ENCODE measurements at regions of chrX and their contacts with region 1.

Region 1: GRCh38 chrX:69222103-69223090 is 57.1 kb upstream of the PJA1 start:
- DNase-seq: peak; percentile 66 to 79
- ATAC-seq: peak; percentile 91 to 96
- H3K4me3 ChIP-seq: no peak overlapping the region
- H3K27ac ChIP-seq: no peak overlapping the region
- H3K4me1 ChIP-seq: no peaks in the 10 kb centered on the region
- CTCF ChIP-seq: peak; percentile 75
- EP300 ChIP-seq: no peak
- POLR2A ChIP-seq: no peak
- RAD21 ChIP-seq: peak; percentile 89 to 93

Region 2: DNA sequence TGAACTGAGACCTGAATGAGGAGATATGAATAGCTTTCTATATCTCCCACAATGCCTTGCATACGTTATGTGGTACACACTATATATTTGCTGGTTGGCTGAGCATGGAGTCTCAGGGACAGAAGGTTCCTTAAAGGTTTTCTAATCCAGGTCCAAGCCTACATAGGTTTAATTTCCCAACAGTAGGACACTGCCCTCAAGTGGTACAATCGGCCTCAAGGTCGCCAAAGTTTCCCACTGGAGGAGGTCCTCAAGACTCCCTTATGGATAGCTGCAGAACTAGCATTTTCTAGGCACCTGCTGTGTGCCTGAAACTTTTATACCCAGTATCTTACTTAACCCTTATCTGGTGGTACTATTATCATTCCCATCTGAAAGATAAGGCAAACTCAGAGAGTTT is 414.6 kb before region 1 on chrX:
- CTCF ChIA-PET with region 1: interaction called, 10 read pairs
- POLR2A ChIA-PET with region 1: no interaction called
- DNase-seq: peak; percentile 10 to 48
- ATAC-seq: peak; percentile 70 to 82; a peak in 4 of 6 replicates
- H3K4me3 ChIP-seq: no peak overlapping the region
- H3K27ac ChIP-seq: no peak overlapping the region
- H3K4me1 ChIP-seq: no peaks in the 10 kb centered on the region
- CTCF ChIP-seq: peak; percentile 39
- EP300 ChIP-seq: no peak
- POLR2A ChIP-seq: no peak
- RAD21 ChIP-seq: peak; percentile 38 to 49; a peak in 3 of 5 replicates

Region 3: GRCh38 chrX:69195192-69195591 is 27.2 kb before region 1 on chrX:
- CTCF ChIA-PET with region 1: interaction called, 12 read pairs
- POLR2A ChIA-PET with region 1: no interaction called
- DNase-seq: no peak
- ATAC-seq: no peak
- H3K4me3 ChIP-seq: no peak overlapping the region
- H3K27ac ChIP-seq: no peak overlapping the region
- H3K4me1 ChIP-seq: no peaks in the 10 kb centered on the region
- CTCF ChIP-seq: no peak
- EP300 ChIP-seq: no peak
- POLR2A ChIP-seq: no peak
- RAD21 ChIP-seq: no peak

Region 4: GRCh38 chrX:69210581-69210980 is 11.8 kb before region 1 on chrX:
- CTCF ChIA-PET with region 1: interaction called, 25 read pairs
- POLR2A ChIA-PET with region 1: no interaction called
- DNase-seq: no peak
- ATAC-seq: no peak
- H3K4me3 ChIP-seq: no peak overlapping the region
- H3K27ac ChIP-seq: no peak overlapping the region
- H3K4me1 ChIP-seq: no peaks in the 10 kb centered on the region
- CTCF ChIP-seq: no peak
- EP300 ChIP-seq: no peak
- POLR2A ChIP-seq: no peak
- RAD21 ChIP-seq: no peak